Transverse colon (tissue), 4 donors: ENCODE measurements at regions of chr22 and their contacts with region 1.

Region 1: GRCh38 chr22:46563381-46564083 is 26.1 kb upstream of the CELSR1 start:
- DNase-seq: peak; percentile 92
- H3K4me3 ChIP-seq: no peak overlapping the region
- H3K27ac ChIP-seq: peak overlapping the region; percentile 74 to 87 (median 80)
- H3K4me1 ChIP-seq: peaks cover 11 to 13% (median 12%) of the 10 kb centered on the region in 4 donors
- H3K27me3 ChIP-seq: no peaks in the 10 kb centered on the region
- CTCF ChIP-seq: peak; percentile 74 to 98 (median 88)
- EP300 ChIP-seq: no peak
- POLR2A ChIP-seq: no peak

Region 2: DNA sequence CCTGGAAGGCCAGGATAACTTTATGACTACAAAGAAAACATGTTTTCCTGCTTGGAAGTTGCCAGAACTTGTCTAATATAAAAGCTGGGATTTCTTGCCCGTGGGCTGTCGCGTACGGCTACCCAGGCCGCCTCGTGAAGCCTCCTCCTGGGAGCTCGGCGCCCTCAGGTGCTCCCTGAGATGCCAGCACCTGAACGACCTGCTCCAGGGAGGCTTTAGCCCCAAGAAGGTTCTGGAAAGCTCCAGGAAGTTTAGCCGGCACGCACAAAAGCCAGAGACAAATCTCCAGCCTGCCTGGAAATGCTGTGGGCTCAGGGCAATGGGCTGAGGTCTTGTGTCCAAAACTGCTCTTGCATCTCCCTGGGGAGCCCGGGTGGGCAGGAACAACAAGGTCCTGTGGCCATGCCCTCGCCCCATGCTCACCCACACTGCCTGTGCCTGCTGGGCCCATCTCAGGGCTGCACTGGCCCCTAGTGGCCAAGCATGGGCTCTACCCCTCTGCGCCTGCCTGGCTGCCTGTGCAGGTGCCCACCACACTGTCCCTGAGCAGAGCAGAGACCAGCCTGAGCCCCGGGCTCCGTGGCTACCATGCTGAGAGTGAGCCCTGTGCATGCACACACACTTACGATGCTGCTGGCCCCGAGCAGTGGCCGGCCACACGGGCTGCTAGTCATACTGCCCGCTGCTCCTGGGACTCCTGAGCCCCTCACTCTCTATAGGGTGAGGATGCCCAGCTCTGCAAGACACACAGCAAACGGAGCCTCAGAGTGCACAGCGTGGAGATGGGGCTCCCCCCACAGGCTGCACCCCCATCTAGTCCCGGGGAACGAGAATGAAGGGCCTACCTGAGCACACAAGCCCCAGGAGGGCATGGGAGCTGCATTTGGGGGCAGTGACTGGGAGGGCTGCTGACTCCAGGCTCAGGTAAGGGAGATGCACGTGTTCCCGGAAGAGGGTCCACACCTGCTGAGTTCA is 21.2 kb before region 1 on chr22:
- in situ Hi-C with region 1: no loop called
- intact Hi-C with region 1: no loop called
- DNase-seq: peak; percentile 76
- H3K4me3 ChIP-seq: no peak overlapping the region
- H3K27ac ChIP-seq: no peak overlapping the region
- H3K4me1 ChIP-seq: peaks cover 4 to 28% (median 22%) of the 10 kb centered on the region in 4 donors
- H3K27me3 ChIP-seq: peaks cover 38% of the 10 kb centered on the region
- CTCF ChIP-seq: peak; percentile 87 to 93 (median 92)
- EP300 ChIP-seq: no peak
- POLR2A ChIP-seq: no peak

Region 3: GRCh38 chr22:46714550-46714949 is 151.0 kb after region 1 on chr22:
- in situ Hi-C with region 1: loop called in 1 of 4 experiments (anchors 25 kb)
- intact Hi-C with region 1: no loop called
- DNase-seq: no peak
- H3K4me3 ChIP-seq: no peak overlapping the region
- H3K27ac ChIP-seq: peak overlapping the region in 1 of 4 donors; percentile 23
- H3K4me1 ChIP-seq: peaks cover 0 to 9% (median 0%) of the 10 kb centered on the region in 4 donors
- H3K27me3 ChIP-seq: no peaks in the 10 kb centered on the region
- CTCF ChIP-seq: no peak
- EP300 ChIP-seq: no peak
- POLR2A ChIP-seq: no peak

Region 4: GRCh38 chr22:46737976-46738646 is 174.6 kb after region 1 on chr22 and contains the start of gene CERK:
- in situ Hi-C with region 1: loop called in 1 of 4 experiments (anchors 25 kb)
- intact Hi-C with region 1: no loop called
- DNase-seq: peak; percentile 87
- H3K4me3 ChIP-seq: peak within 1 kb of the TSS; percentile 76 to 88 (median 84)
- H3K27ac ChIP-seq: peak within 1 kb of the TSS; percentile 92 to 95 (median 94)
- H3K4me1 ChIP-seq: peaks cover 37 to 88% (median 65%) of the 10 kb centered on the region in 4 donors
- H3K27me3 ChIP-seq: no peaks in the 10 kb centered on the region
- CTCF ChIP-seq: no peak
- EP300 ChIP-seq: no peak
- POLR2A ChIP-seq: peak; percentile 31
- total RNA-seq, gene CERK: 13.7 to 72.2 (median 63.5) TPM

Region 5: GRCh38 chr22:46762238-46763050 is 198.9 kb after region 1 on chr22 and contains the start of gene TBC1D22A:
- in situ Hi-C with region 1: loop called in 1 of 4 experiments (anchors 25 kb)
- intact Hi-C with region 1: no loop called
- DNase-seq: peak; percentile 96
- H3K4me3 ChIP-seq: peak within 1 kb of the TSS; percentile 63 to 79 (median 76)
- H3K27ac ChIP-seq: peak within 1 kb of the TSS; percentile 90 to 98 (median 97)
- H3K4me1 ChIP-seq: peaks cover 16 to 67% (median 36%) of the 10 kb centered on the region in 4 donors
- H3K27me3 ChIP-seq: no peaks in the 10 kb centered on the region
- CTCF ChIP-seq: peak in 4 of 5 experiments; percentile 7 to 55 (median 28)
- EP300 ChIP-seq: no peak
- POLR2A ChIP-seq: peak; percentile 99
- total RNA-seq, gene TBC1D22A: 31.2 to 111 (median 41.8) TPM